ENCODE measurements at regions of chr12 and their contacts with region 1.

Region 1: GRCh38 chr12:118035246-118036041 is 18.9 kb downstream of the RFC5 start:
- DNase-seq: no peak
- H3K4me3 ChIP-seq: no peak overlapping the region
- H3K27ac ChIP-seq: no peak overlapping the region
- H3K4me1 ChIP-seq: no peaks in the 10 kb centered on the region
- H3K27me3 ChIP-seq: no peaks in the 10 kb centered on the region
- CTCF ChIP-seq: no peak
- POLR2A ChIP-seq: no peak

Region 2: DNA sequence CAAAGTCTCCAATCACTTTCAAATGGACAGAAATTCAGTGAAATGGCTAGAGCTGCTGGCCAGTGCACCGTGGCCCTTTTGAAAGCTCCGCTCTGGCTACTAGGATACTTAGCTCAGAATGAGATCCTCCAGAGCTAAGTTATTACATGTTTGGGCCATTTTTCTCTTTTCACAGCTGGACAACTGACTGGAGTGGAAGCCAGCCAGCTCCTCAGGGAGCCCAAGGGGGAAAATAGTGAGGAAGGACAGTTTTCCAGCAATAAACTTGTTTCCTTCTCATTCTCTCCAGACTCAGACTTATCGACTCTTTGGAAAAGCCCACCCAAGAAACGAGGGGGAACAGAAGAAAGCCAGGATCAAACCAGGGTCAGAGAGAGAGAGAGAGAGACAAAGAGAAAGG is 332.7 kb before region 1 on chr12:
- intact Hi-C with region 1: no loop called
- DNase-seq: no peak
- H3K4me3 ChIP-seq: no peak overlapping the region
- H3K27ac ChIP-seq: no peak overlapping the region
- H3K4me1 ChIP-seq: no peaks in the 10 kb centered on the region
- H3K27me3 ChIP-seq: no peaks in the 10 kb centered on the region
- CTCF ChIP-seq: no peak
- POLR2A ChIP-seq: no peak

Region 3: DNA sequence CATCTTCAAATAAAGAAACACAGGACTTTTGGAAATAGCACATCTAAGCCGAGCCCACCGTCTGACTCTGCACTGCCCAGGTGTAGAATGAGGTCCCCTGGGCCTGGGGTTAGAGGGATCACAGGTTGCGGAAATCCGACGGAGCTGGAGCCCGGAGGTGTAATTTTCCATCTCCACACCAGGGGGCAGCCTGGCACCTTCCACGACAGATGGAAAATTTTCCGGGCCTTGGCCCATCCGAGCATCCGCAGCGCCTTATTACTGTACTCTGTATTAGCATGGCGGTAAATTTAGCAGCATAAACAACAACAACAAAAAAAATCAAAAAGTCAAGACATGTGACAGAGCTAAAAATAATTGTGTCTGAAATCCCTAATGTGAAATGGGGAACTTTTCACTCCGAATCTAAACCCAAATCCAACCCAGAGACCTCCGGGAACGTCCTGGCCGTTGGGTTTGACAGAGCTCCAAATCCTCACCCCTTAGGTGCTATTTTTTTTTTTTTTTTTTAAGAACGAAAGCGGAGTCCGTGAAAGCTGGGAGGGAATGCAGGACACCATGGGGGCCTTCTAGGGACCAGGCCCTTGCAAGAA is 160.5 kb before region 1 on chr12:
- intact Hi-C with region 1: loop called (anchors 10 kb)
- DNase-seq: peak; percentile 65
- H3K4me3 ChIP-seq: no peak overlapping the region
- H3K27ac ChIP-seq: no peak overlapping the region
- H3K4me1 ChIP-seq: no peaks in the 10 kb centered on the region
- H3K27me3 ChIP-seq: no peaks in the 10 kb centered on the region
- CTCF ChIP-seq: peak; percentile 79 to 89 (median 88)
- POLR2A ChIP-seq: no peak

Region 4: DNA sequence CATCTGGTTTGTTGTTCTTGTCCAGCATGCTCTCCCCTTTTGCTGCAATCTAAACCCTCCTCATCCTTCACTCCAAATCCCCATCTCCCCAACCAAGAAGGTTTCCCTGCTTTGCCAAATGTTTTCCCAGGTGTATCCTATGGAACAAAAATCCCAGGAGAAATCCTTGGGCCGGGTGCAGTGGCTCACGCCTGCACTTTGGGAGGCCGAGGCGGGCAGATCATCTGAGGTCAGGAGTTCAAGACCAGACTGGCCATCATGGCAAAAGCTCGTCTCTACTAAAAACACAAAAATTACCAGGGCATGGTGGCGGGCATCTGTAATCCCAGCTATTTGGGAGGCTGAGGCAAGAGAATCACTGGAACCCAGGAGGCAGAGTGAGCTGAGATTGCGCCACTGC is 71.6 kb before region 1 on chr12:
- intact Hi-C with region 1: no loop called
- DNase-seq: no peak
- H3K4me3 ChIP-seq: no peak overlapping the region
- H3K27ac ChIP-seq: no peak overlapping the region
- H3K4me1 ChIP-seq: no peaks in the 10 kb centered on the region
- H3K27me3 ChIP-seq: no peaks in the 10 kb centered on the region
- CTCF ChIP-seq: no peak
- POLR2A ChIP-seq: no peak